ENCODE measurements at regions of chr15 and their contacts with region 1.

Region 1: DNA sequence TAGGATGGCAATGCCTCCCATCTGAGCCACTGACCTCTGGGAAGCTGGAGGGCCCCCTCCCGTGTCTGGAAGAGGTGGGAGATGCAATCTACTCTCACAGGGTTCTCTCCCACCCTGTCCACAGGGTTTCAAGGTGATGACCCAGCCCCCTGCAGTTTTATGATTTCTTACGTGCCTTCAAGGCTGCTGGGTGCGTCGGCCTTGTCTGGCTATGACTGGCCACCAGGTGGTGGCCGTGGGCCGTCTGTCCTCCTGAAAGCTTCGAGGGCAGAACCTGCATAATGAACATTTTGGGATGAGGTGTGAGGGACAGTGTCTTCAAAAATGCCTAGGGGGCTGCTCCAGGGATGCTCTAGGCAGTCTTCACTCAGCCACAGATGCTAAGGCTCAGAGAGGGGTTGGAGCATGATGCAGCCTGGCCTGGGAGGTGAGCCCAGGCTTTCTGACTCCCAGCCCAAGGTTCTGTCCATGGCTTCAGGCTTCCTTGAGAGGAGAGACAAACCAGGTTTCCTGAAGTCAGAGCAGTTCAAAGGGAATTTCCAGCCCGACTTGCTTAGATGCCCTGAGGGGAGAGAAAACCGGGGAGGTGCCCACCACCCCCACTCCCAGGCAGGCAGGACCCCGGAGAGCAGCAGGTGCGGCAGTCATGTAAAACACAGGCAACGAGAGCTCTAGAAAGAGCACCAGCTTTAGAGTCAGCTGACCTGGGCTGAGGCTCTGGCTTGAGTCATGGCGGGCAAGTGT is 18.7 kb downstream of the ISG20 start:
- DNase-seq: peak; percentile 55
- H3K4me3 ChIP-seq: no peak overlapping the region
- H3K27ac ChIP-seq: no peak overlapping the region
- H3K4me1 ChIP-seq: peaks cover 49% of the 10 kb centered on the region
- H3K27me3 ChIP-seq: no peaks in the 10 kb centered on the region
- CTCF ChIP-seq: peak; percentile 94

Region 2: GRCh38 chr15:88574655-88575054 is 82.8 kb before region 1 on chr15:
- CTCF ChIA-PET with region 1: no interaction called
- dilution Hi-C with region 1: no loop called
- in situ Hi-C with region 1: no loop called
- intact Hi-C with region 1: no loop called
- DNase-seq: no peak
- H3K4me3 ChIP-seq: no peak overlapping the region
- H3K27ac ChIP-seq: no peak overlapping the region
- H3K4me1 ChIP-seq: no peaks in the 10 kb centered on the region
- H3K27me3 ChIP-seq: no peaks in the 10 kb centered on the region
- CTCF ChIP-seq: no peak

Region 3: GRCh38 chr15:88701561-88702095 is 44.1 kb after region 1 on chr15:
- CTCF ChIA-PET with region 1: interaction called, 8 read pairs
- dilution Hi-C with region 1: no loop called
- in situ Hi-C with region 1: no loop called
- intact Hi-C with region 1: loop called (anchors 1 kb)
- DNase-seq: no peak
- H3K4me3 ChIP-seq: no peak overlapping the region
- H3K27ac ChIP-seq: no peak overlapping the region
- H3K4me1 ChIP-seq: peaks cover 4% of the 10 kb centered on the region
- H3K27me3 ChIP-seq: peaks cover 2% of the 10 kb centered on the region
- CTCF ChIP-seq: peak; percentile 38 to 62

Region 4: GRCh38 chr15:88805031-88805782 is 147.7 kb after region 1 on chr15:
- CTCF ChIA-PET with region 1: no interaction called
- dilution Hi-C with region 1: no loop called
- in situ Hi-C with region 1: no loop called
- intact Hi-C with region 1: loop called (anchors 1 kb)
- DNase-seq: no peak
- H3K4me3 ChIP-seq: no peak overlapping the region
- H3K27ac ChIP-seq: no peak overlapping the region
- H3K4me1 ChIP-seq: peaks cover 9% of the 10 kb centered on the region
- H3K27me3 ChIP-seq: peaks cover 25% of the 10 kb centered on the region
- CTCF ChIP-seq: peak in 1 of 2 donors; percentile 21

Region 5: GRCh38 chr15:88878720-88879184 is 221.3 kb after region 1 on chr15:
- CTCF ChIA-PET with region 1: interaction called, 3 read pairs
- dilution Hi-C with region 1: loop called (anchors 10 kb)
- in situ Hi-C with region 1: no loop called
- intact Hi-C with region 1: loop called (anchors 1 kb)
- DNase-seq: no peak
- H3K4me3 ChIP-seq: no peak overlapping the region
- H3K27ac ChIP-seq: no peak overlapping the region
- H3K4me1 ChIP-seq: peaks cover 3% of the 10 kb centered on the region
- H3K27me3 ChIP-seq: no peaks in the 10 kb centered on the region
- CTCF ChIP-seq: peak; percentile 80 to 92

Region 6: GRCh38 chr15:89017370-89018066 is 360.0 kb after region 1 on chr15:
- CTCF ChIA-PET with region 1: no interaction called
- dilution Hi-C with region 1: no loop called
- in situ Hi-C with region 1: loop called in 1 of 2 experiments (anchors 25 kb)
- intact Hi-C with region 1: loop called (anchors 1 kb)
- DNase-seq: peak; percentile 66
- H3K4me3 ChIP-seq: peak overlapping the region; percentile 16 to 43 (median 37)
- H3K27ac ChIP-seq: peak overlapping the region; percentile 26
- H3K4me1 ChIP-seq: peaks cover 20% of the 10 kb centered on the region
- H3K27me3 ChIP-seq: no peaks in the 10 kb centered on the region
- CTCF ChIP-seq: peak; percentile 83 to 94

Region 7: DNA sequence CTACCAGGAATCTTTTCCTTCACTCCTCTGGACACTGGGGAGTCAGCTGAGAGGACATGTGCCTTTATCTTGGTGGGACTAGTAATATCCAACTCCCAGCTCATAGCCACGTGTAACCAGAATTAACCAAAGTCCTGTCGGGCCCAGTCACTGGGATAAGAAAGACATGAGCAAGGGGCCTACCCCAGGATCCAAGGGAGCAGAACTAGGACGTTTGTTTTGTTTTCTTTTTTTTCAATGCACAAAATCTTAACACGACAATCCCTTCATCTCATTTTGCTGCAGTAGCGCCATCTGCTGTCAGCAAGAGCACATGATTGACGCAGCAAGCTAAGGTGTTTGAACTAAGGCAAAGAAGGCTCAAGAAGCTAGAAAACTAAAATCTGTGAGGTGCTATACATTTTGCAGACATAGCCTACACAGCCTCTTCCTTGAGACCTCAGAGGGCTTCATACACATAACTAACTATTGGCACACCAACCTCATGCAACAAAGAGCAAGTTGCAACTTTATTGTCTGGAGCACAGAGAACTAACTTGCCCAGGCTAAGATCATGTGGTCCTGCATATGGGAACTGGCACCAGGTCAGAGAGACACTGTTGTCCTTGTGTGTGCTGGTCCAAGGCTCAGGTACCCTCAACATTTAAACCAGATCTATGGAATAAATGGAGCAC is 520.3 kb after region 1 on chr15:
- CTCF ChIA-PET with region 1: no interaction called
- dilution Hi-C with region 1: loop called (anchors 25 kb)
- in situ Hi-C with region 1: no loop called
- intact Hi-C with region 1: loop called (anchors 5 kb)
- DNase-seq: peak; percentile 52
- H3K4me3 ChIP-seq: no peak overlapping the region
- H3K27ac ChIP-seq: no peak overlapping the region
- H3K4me1 ChIP-seq: no peaks in the 10 kb centered on the region
- H3K27me3 ChIP-seq: no peaks in the 10 kb centered on the region
- CTCF ChIP-seq: peak; percentile 87 to 92

Measured in mammary epithelial cell (primary cell).